GM12878 (cell line): ENCODE measurements at regions of chr1 and their contacts with region 1.

Region 1: GRCh38 chr1:164660412-164660772 is 101.4 kb downstream of the PBX1 start:
- DNase-seq: peak; percentile 9
- ATAC-seq: peak; percentile 86
- H3K4me3 ChIP-seq: no peak overlapping the region
- H3K27ac ChIP-seq: no peak overlapping the region
- H3K4me1 ChIP-seq: no peaks in the 10 kb centered on the region
- H3K27me3 ChIP-seq: no peaks in the 10 kb centered on the region
- CTCF ChIP-seq: no peak; a peak in 1 of 6 replicates
- EP300 ChIP-seq: peak in 1 of 2 experiments; percentile 57; a peak in 1 of 4 replicates
- POLR2A ChIP-seq: no peak
- RAD21 ChIP-seq: no peak

Region 2: DNA sequence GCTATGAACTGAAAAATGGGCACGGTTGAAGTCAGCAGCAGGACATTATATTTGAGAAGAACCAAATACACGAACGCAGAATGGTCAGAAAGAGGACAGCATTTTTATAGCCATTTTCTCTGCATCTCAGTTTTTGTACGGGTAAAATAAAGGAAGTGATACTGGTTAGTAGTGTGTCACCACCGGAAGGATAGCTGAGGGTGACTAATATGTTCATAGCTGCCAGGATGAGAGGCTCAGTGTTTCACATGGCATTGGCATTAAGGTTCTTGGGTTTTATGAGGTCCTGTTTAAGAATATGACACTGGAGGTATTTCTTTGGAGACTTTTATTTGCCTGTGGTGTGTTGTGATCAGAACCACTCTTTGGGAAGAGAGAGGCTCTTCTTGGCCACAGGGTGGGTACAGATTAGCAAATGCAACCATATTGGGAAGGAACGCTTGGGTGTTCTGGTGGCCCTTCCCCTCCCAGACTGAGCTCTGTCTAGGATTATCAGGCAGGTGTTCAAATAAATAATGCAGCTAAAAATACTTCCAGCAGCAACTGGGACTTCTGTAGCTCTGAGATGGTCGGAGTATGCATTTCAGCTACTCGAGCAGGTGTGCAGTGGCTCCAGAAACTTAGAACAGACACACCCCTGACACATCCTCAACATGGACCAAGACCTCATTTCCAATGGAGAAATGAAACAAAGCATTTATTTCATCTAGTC is 56.8 kb after region 1 on chr1:
- CTCF ChIA-PET with region 1: no interaction called
- POLR2A ChIA-PET with region 1: no interaction called
- RAD21 ChIA-PET with region 1: no interaction called
- SMC1A ChIA-PET with region 1: no interaction called
- in situ Hi-C with region 1: no loop called
- intact Hi-C with region 1: no loop called
- DNase-seq: no peak
- ATAC-seq: peak; percentile 93
- H3K4me3 ChIP-seq: no peak overlapping the region
- H3K27ac ChIP-seq: no peak overlapping the region
- H3K4me1 ChIP-seq: no peaks in the 10 kb centered on the region
- H3K27me3 ChIP-seq: no peaks in the 10 kb centered on the region
- CTCF ChIP-seq: no peak
- EP300 ChIP-seq: no peak
- POLR2A ChIP-seq: no peak
- RAD21 ChIP-seq: no peak

Region 3: DNA sequence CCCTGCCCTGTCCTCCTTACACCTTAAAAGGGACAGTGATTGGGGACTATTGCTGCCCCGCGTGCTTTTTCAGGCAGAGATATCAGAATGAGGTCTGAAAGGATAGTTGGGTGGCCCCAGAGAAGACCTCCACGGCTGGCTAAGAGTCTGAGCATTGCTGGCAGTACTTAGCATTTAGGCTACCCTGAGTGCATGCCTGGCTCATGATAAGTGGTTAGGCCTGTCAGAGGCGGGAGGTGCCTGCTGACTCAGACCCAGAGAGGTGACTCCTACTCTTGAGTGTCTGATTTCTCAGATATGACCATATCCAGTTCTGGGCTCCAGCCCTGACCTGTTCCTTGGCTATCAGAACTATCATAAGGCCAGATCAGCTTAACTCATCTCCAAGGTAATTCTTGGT is 112.2 kb after region 1 on chr1:
- CTCF ChIA-PET with region 1: no interaction called
- POLR2A ChIA-PET with region 1: no interaction called
- RAD21 ChIA-PET with region 1: no interaction called
- SMC1A ChIA-PET with region 1: no interaction called
- in situ Hi-C with region 1: no loop called
- intact Hi-C with region 1: loop called (anchors 5 kb)
- DNase-seq: no peak
- ATAC-seq: peak; percentile 93
- H3K4me3 ChIP-seq: no peak overlapping the region
- H3K27ac ChIP-seq: no peak overlapping the region
- H3K4me1 ChIP-seq: no peaks in the 10 kb centered on the region
- H3K27me3 ChIP-seq: no peaks in the 10 kb centered on the region
- CTCF ChIP-seq: no peak
- EP300 ChIP-seq: no peak
- POLR2A ChIP-seq: no peak
- RAD21 ChIP-seq: no peak